Heart right ventricle (tissue), 16 donors: ENCODE measurements at regions of chr16 and their contacts with region 1.

Region 1: GRCh38 chr16:15539197-15539596 is 103.8 kb downstream of the MARF1 start:
- DNase-seq: no peak
- ATAC-seq: no peak
- H3K4me3 ChIP-seq: no peak overlapping the region
- H3K27ac ChIP-seq: no peak overlapping the region
- H3K4me1 ChIP-seq: no peaks in the 10 kb centered on the region
- H3K27me3 ChIP-seq: no peaks in the 10 kb centered on the region
- CTCF ChIP-seq: no peak

Region 2: GRCh38 chr16:15518390-15519351 is 20.5 kb before region 1 on chr16:
- intact Hi-C with region 1: no loop called
- DNase-seq: peak; percentile 27 to 28
- ATAC-seq: peak in 7 of 8 donors; percentile 32 to 75 (median 43)
- H3K4me3 ChIP-seq: no peak overlapping the region
- H3K27ac ChIP-seq: peak overlapping the region in 4 of 10 donors; percentile 20 to 31 (median 30)
- H3K4me1 ChIP-seq: peaks cover 0 to 54% (median 16%) of the 10 kb centered on the region in 9 donors
- H3K27me3 ChIP-seq: no peaks in the 10 kb centered on the region
- CTCF ChIP-seq: no peak

Region 3: DNA sequence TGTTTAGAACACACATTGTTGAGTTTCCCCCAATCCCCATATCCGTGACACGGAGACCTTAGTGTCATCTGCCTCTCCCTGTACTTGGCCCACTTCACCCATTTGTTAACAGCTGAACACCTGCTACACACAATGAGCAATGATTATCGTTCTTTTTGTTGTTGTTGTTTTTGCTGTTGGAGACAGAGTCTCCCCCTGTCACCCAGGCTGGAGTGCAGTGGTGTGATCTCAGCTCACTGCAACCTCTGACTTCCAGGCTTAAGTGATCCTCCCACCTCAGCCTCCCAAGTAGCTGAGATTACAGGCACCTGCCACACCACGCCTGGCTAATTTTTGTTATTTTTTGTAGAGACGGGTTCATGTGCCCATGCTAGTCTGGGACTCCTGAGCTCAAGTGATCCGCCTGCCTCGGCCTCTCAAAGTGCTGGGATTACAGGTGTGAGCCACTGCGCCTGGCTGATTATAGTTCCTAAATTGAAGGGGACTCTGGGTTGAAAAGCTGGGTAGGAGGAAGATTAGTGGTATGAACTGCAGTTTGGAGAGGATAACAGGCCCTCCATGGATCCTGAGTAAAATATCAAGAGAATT is 132.4 kb after region 1 on chr16:
- intact Hi-C with region 1: no loop called
- DNase-seq: no peak
- ATAC-seq: no peak
- H3K4me3 ChIP-seq: no peak overlapping the region
- H3K27ac ChIP-seq: peak overlapping the region; percentile 75 to 97 (median 90)
- H3K4me1 ChIP-seq: peaks cover 11 to 34% (median 25%) of the 10 kb centered on the region in 9 donors
- H3K27me3 ChIP-seq: no peaks in the 10 kb centered on the region
- CTCF ChIP-seq: no peak

Region 4: DNA sequence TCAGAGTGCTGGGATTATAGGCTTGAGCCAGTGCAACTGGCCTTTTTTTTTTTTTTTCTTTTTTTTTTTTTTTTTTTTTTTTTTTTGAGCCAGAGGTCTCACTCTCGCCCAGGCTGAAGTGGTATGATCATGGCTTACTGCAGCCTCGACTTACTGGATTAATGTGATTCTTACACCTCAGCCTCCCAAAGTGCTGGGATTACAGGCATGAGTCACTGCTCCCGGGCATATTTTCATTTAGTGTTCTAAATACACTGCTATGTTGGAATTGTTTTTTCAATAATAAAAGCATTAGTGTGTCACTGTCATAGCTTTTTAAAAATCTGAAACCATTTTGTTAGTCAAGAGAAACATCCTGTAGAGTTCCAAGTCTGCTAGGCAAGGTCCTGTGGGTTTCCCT is 151.1 kb after region 1 on chr16:
- intact Hi-C with region 1: loop called in 1 of 10 experiments (anchors 10 kb)
- DNase-seq: no peak
- ATAC-seq: no peak
- H3K4me3 ChIP-seq: no peak overlapping the region
- H3K27ac ChIP-seq: no peak overlapping the region
- H3K4me1 ChIP-seq: no peaks in the 10 kb centered on the region
- H3K27me3 ChIP-seq: no peaks in the 10 kb centered on the region
- CTCF ChIP-seq: no peak